ENCODE measurements at regions of chr19 and their contacts with region 1.

Region 1: DNA sequence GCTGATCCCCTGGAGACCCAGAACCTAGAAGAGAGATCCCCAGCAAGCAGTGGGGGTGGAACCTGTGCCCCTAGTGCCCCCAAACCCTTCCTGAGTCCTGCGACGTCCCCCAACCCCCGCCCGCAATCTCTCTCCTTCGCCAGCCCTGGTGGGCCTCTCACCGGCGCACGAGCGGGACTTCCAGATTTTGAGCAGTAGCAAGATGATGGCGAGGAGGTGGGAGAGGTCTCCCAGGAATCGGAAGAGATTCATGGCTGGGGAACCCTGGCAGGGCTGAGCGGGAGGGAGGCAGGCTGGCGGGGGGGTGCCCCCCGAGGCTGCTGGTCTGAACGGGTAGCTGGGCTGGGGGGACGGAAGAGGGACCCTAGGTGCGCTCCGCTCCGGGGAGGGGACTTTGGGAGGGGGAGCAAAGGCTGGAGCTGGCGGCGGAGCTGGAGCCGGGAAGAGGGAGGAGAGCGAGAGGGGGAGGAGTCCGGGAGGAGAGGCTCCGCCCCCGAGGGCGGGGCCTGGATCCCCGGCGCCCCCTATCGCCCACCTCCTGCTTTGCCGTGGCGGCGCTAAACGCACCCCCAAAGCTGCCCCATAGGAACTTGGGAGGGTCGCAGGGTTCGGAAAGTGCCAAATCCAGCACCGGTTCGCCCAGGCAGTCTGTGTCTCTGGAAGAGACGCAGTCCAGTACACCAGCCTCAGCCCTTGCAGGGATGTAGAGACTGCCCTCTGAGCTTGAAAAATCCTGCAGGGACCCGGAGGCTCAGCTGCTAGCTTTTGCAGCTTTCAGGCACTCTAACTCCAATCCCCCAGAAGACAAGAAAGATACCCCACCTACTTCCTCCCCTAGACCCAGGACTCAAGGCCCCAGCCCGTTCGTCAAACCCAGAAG is at the start of gene KDELR1:
- DNase-seq: peak; percentile 80
- H3K4me3 Mint-ChIP-seq: peak within 1 kb of the TSS; percentile 90
- H3K27ac Mint-ChIP-seq: peak within 1 kb of the TSS; percentile 87
- H3K4me1 Mint-ChIP-seq: peaks cover 25% of the 10 kb centered on the region
- H3K27me3 Mint-ChIP-seq: peaks cover 23% of the 10 kb centered on the region
- total RNA-seq, gene KDELR1: 82.9 to 88.1 TPM

Region 2: DNA sequence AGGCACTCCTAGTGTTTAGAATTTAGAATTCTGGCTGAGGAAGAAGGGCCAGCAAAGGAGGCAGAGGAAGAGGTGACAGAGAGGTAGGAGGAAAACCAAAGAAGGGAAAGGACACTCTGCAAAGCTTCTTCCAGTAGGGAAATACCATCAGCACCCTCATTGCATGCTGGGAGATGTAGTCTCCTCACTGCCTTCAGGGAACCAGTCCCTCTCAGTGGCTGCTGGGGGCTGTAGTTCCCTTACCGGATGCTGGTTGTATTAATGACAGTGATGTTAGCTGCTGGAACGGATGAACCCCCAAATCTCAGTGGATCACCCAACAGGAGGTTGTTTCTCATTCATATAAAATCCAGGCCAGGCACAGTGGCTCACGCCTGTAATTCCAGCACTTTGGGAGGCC is 12.3 kb after region 1 on chr19:
- CTCF ChIA-PET with region 1: interaction called, 24 read pairs
- POLR2A ChIA-PET with region 1: no interaction called
- intact Hi-C with region 1: no loop called
- DNase-seq: peak; percentile 65
- H3K4me3 Mint-ChIP-seq: no peak overlapping the region
- H3K27ac Mint-ChIP-seq: no peak overlapping the region
- H3K4me1 Mint-ChIP-seq: peaks cover 9% of the 10 kb centered on the region
- H3K27me3 Mint-ChIP-seq: peaks cover 3% of the 10 kb centered on the region

Region 3: DNA sequence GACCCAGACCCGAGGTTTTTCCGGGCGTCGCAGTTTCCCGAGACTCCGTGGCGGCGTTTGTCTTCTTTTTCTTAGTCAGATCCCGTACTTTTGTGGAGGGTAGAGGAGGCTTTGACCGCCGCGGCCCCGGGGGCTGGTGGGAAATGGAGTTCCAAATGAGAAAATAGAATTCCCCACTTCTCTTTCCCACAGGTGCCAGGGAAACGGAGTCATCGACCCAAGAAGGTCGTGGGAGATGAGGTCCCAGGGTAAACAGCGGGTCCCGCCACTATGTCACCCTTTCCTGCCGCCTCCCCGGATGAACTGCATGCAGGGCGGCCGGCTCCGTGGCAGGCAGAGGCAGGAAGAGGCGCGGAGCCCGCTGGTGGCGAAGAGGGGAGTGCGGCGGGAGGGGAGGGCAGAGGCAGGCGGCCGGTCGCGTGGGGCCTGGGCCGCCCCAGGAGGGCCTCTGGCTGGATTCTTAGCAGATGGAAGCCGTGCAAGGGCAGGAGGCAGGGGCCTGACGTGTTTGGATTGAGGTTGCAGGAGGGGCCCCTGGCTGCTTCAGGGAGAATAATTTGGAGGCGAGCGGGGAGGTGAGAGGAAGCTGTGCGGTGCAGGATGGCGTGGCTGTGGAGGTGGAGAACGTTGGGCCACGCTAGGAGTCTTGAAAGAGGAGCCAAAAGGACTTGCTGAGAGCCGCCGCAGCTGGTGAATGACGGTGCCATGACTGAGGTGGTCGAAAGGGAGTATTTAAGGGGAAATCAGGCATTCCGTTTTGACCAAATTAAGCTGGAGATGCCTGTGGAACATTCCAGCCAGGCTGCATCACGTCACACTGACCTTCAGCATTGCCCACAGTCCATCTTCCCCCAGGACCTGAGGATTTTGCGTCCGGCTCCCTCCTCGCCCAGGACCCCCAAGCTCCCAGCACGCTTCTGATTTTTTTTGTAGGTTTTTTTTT is 89.5 kb after region 1 on chr19:
- CTCF ChIA-PET with region 1: interaction called, 10 read pairs
- POLR2A ChIA-PET with region 1: no interaction called
- intact Hi-C with region 1: no loop called
- DNase-seq: peak; percentile 69
- H3K4me3 Mint-ChIP-seq: peak overlapping the region; percentile 73
- H3K27ac Mint-ChIP-seq: peak overlapping the region; percentile 70
- H3K4me1 Mint-ChIP-seq: peaks cover 14% of the 10 kb centered on the region
- H3K27me3 Mint-ChIP-seq: no peaks in the 10 kb centered on the region

Measured in activated CD4-positive, alpha-beta memory T cell treated with anti-CD3 and anti-CD28 coated beads for 36 hours (primary cell).